ENCODE measurements at regions of chr3 and their contacts with region 1.

Region 1: DNA sequence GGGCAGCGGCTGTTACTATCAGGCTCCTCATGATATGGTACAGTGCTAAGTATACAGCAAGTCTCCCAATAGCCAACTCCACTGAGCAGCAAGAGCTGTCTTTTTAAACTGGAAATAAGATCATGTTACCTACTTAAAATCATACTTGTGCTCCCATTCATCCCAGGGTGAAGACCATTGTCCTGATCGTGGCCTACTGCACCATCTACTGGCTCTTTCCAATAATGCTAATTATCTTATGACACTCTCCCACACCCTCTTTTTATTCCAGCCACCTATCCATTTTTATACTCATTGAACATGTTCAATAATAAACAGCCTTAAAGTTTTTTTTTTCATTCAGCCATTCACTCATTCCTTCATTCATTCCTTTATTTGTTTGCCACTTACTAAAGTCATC is 117.7 kb downstream of the GBE1 start:
- DNase-seq: peak; percentile 41
- H3K4me3 ChIP-seq: no peak overlapping the region
- H3K27ac ChIP-seq: no peak overlapping the region
- H3K4me1 ChIP-seq: no peaks in the 10 kb centered on the region
- H3K27me3 ChIP-seq: no peaks in the 10 kb centered on the region
- CTCF ChIP-seq: peak; percentile 28 to 42
- POLR2A ChIP-seq: no peak

Region 2: GRCh38 chr3:81581966-81582599 is 61.6 kb before region 1 on chr3:
- CTCF ChIA-PET with region 1: interaction called, 3 read pairs
- POLR2A ChIA-PET with region 1: no interaction called
- dilution Hi-C with region 1: no loop called
- intact Hi-C with region 1: loop called (anchors 2 kb)
- DNase-seq: peak; percentile 50
- H3K4me3 ChIP-seq: no peak overlapping the region
- H3K27ac ChIP-seq: no peak overlapping the region
- H3K4me1 ChIP-seq: no peaks in the 10 kb centered on the region
- H3K27me3 ChIP-seq: no peaks in the 10 kb centered on the region
- CTCF ChIP-seq: peak; percentile 62 to 66
- POLR2A ChIP-seq: no peak

Region 3: DNA sequence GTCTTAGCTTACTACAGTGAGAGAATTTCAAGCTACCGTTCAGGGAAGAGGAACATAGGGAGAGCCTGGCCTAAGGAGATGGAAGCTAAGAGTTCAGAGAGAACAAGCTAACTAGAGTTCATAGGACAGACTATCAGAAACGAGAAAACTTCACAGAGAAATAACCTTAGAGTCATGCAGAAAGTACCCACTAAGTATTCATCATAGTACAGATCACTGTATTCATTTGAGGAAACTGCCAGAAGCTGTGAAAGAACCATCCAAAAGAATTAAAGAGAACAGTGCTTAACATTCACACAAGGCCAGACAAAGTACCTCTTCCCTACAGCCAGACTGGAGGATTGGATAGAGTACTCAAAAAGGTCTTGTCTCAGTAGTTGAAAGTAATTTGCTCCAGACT is 132.9 kb after region 1 on chr3:
- CTCF ChIA-PET with region 1: no interaction called
- POLR2A ChIA-PET with region 1: no interaction called
- dilution Hi-C with region 1: no loop called
- intact Hi-C with region 1: no loop called
- DNase-seq: no peak
- H3K4me3 ChIP-seq: no peak overlapping the region
- H3K27ac ChIP-seq: no peak overlapping the region
- H3K4me1 ChIP-seq: no peaks in the 10 kb centered on the region
- H3K27me3 ChIP-seq: no peaks in the 10 kb centered on the region
- CTCF ChIP-seq: no peak
- POLR2A ChIP-seq: no peak

Measured in endothelial cell of umbilical vein (primary cell).